ENCODE measurements at regions of chr4 and their contacts with region 1.

Region 1: GRCh38 chr4:102760645-102761295 is at the start of gene MANBA:
- DNase-seq: peak; percentile 78 to 84 (median 79)
- H3K4me3 ChIP-seq: peak within 1 kb of the TSS; percentile 77 to 89
- H3K4me3 Mint-ChIP-seq: peak within 1 kb of the TSS; percentile 92 to 99 (median 98)
- H3K27ac ChIP-seq: peak within 1 kb of the TSS; percentile 65
- H3K27ac Mint-ChIP-seq: peak within 1 kb of the TSS; percentile 75 to 96 (median 94)
- H3K4me1 ChIP-seq: peaks cover 18% of the 10 kb centered on the region
- H3K4me1 Mint-ChIP-seq: peaks cover 24 to 47% (median 36%) of the 10 kb centered on the region in 4 donors
- H3K27me3 ChIP-seq: no peaks in the 10 kb centered on the region
- H3K27me3 Mint-ChIP-seq: peaks cover 0 to 3% of the 10 kb centered on the region in 2 donors
- total RNA-seq, gene MANBA: 30.0 to 33.2 TPM

Region 2: DNA sequence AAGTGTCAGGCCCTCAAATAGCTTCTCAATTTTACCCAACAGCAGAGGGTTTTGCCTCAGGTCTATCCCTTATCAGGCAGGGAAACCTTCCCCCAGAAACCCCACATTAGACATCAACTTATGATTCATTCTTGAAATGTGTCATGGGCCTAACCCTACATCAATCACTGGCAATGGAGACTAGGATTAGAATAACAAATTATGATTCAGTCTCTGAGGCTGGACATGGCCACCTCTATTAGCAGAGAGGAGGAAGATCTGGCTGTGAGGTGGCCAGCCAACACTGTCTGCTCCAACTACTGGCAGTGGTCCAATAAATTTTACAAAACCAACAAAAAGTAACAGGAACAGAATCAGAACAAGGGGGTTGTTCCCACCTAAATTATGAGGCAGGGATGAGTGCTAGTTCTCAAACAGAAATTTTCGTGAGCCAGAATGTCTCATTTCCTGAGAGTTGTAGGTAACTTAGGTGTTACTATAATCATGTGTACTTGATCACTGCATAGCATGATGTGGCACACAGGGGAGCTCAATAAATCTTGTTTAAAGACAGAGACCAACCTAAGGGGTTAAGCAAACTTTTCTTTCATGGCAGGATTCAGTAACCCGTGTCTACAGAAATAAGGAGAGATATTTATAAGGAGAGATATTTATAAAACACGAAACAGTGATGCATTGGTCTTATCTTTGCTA is 132.8 kb before region 1 on chr4:
- CTCF ChIA-PET with region 1: interaction called, 3 read pairs
- POLR2A ChIA-PET with region 1: interaction called, 22 read pairs
- intact Hi-C with region 1: loop called (anchors 5 kb)
- DNase-seq: peak in 1 of 5 donors; percentile 49
- H3K4me3 ChIP-seq: no peak overlapping the region
- H3K4me3 Mint-ChIP-seq: peak overlapping the region in 4 of 8 donors; percentile 13 to 71 (median 38)
- H3K27ac ChIP-seq: no peak overlapping the region
- H3K27ac Mint-ChIP-seq: peak overlapping the region in 5 of 7 donors; percentile 35 to 93 (median 81)
- H3K4me1 ChIP-seq: peaks cover 66% of the 10 kb centered on the region
- H3K4me1 Mint-ChIP-seq: peaks cover 47 to 94% (median 65%) of the 10 kb centered on the region in 4 donors
- H3K27me3 ChIP-seq: no peaks in the 10 kb centered on the region
- H3K27me3 Mint-ChIP-seq: no peaks in the 10 kb centered on the region

Region 3: DNA sequence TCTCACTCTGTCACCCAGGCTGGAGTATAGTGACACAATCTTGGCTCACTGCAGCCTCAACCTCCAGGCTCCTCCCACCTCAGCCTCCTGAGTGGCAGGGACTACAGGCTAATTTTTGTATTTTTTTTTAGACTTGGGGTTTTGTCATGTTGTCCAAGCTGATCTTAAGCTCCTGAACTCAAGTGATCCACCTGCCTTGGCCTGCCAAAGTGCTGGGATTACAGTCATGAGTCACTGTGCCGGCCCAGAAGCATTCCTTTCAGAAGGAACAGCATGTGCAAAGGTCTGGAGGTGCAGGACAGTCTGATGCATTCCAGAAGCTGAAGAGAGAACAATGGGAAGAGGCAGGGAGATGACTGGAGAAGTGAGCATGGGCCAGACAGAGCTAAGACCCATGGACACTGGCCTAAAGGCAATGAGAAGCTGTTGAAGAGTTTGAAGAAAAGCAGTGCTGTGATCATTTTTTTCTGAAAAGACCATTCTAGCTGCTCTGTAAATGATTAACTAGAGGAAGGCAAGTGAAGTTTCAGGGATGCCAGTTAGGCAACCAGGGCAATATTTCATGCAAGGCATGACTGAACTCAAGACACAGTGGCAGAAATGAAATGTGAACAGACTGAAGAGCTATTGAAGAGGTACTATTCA is 43.2 kb before region 1 on chr4:
- CTCF ChIA-PET with region 1: no interaction called
- POLR2A ChIA-PET with region 1: no interaction called
- intact Hi-C with region 1: no loop called
- DNase-seq: no peak
- H3K4me3 ChIP-seq: no peak overlapping the region
- H3K4me3 Mint-ChIP-seq: no peak overlapping the region
- H3K27ac ChIP-seq: no peak overlapping the region
- H3K27ac Mint-ChIP-seq: peak overlapping the region in 3 of 7 donors; percentile 5 to 11 (median 8)
- H3K4me1 ChIP-seq: no peaks in the 10 kb centered on the region
- H3K4me1 Mint-ChIP-seq: peaks cover 0 to 4% (median 0%) of the 10 kb centered on the region in 4 donors
- H3K27me3 ChIP-seq: no peaks in the 10 kb centered on the region
- H3K27me3 Mint-ChIP-seq: no peaks in the 10 kb centered on the region

Region 4: GRCh38 chr4:102789317-102789717 is 28.5 kb after region 1 on chr4:
- CTCF ChIA-PET with region 1: interaction called, 4 read pairs
- POLR2A ChIA-PET with region 1: interaction called, 12 read pairs
- intact Hi-C with region 1: loop called (anchors 2 kb)
- DNase-seq: no peak
- H3K4me3 ChIP-seq: no peak overlapping the region
- H3K4me3 Mint-ChIP-seq: no peak overlapping the region
- H3K27ac ChIP-seq: no peak overlapping the region
- H3K27ac Mint-ChIP-seq: peak overlapping the region in 2 of 7 donors; percentile 14 to 68
- H3K4me1 ChIP-seq: peaks cover 6% of the 10 kb centered on the region
- H3K4me1 Mint-ChIP-seq: peaks cover 6 to 24% (median 20%) of the 10 kb centered on the region in 4 donors
- H3K27me3 ChIP-seq: no peaks in the 10 kb centered on the region
- H3K27me3 Mint-ChIP-seq: no peaks in the 10 kb centered on the region

Region 5: GRCh38 chr4:102815981-102816380 is 55.2 kb after region 1 on chr4:
- CTCF ChIA-PET with region 1: interaction called, 4 read pairs
- POLR2A ChIA-PET with region 1: interaction called, 10 read pairs
- intact Hi-C with region 1: no loop called
- DNase-seq: no peak
- H3K4me3 ChIP-seq: no peak overlapping the region
- H3K4me3 Mint-ChIP-seq: peak overlapping the region in 6 of 8 donors; percentile 7 to 84 (median 70)
- H3K27ac ChIP-seq: no peak overlapping the region
- H3K27ac Mint-ChIP-seq: peak overlapping the region in 5 of 7 donors; percentile 23 to 77 (median 45)
- H3K4me1 ChIP-seq: peaks cover 98% of the 10 kb centered on the region
- H3K4me1 Mint-ChIP-seq: peaks cover 70 to 92% (median 81%) of the 10 kb centered on the region in 4 donors
- H3K27me3 ChIP-seq: no peaks in the 10 kb centered on the region
- H3K27me3 Mint-ChIP-seq: no peaks in the 10 kb centered on the region

Region 6: DNA sequence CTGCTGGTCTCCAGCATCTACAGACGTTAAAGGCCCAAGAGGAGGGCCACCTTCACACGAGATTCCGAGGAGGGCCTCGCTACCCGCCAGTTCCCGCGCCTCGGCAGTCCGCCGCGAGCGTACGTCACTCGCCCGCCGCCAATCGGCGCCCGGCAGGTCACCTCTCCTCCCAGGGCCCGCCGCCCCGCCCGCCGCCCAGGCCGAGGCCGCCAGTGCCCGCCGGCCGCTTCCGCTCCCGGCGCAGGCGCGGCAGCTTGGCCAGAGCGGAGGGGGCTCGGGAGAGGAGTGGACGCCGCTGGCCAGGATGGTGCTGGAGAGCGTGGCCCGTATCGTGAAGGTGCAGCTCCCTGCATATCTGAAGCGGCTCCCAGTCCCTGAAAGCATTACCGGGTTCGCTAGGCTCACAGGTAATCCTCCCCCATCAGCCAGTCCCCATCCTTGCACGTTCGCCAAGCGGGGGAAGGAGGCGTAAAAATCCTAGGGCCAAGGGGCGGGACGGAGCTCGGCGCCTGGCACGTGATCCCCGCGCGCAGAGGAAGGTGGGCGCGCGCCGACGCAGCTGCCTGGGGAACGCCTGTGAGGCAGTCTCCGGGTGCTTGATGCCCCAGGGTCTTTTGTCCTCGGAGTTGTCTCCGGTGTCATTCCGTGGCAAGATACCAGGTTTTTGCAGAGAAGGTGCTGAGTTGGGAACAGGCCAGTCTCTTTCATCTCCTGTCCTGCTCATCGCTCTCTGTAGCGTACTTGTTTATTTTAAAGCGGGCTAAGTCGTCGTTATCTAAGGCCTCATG is 108.2 kb after region 1 on chr4 and contains the start of gene CISD2:
- CTCF ChIA-PET with region 1: interaction called, 8 read pairs
- POLR2A ChIA-PET with region 1: interaction called, 28 read pairs
- intact Hi-C with region 1: loop called (anchors 1 kb)
- DNase-seq: peak; percentile 92 to 94 (median 92)
- H3K4me3 ChIP-seq: peak within 1 kb of the TSS; percentile 58 to 74
- H3K4me3 Mint-ChIP-seq: peak within 1 kb of the TSS; percentile 91 to 99 (median 95)
- H3K27ac ChIP-seq: peak within 1 kb of the TSS; percentile 91
- H3K27ac Mint-ChIP-seq: peak within 1 kb of the TSS; percentile 95 to 100 (median 99)
- H3K4me1 ChIP-seq: peaks cover 54% of the 10 kb centered on the region
- H3K4me1 Mint-ChIP-seq: peaks cover 39 to 82% (median 50%) of the 10 kb centered on the region in 4 donors
- H3K27me3 ChIP-seq: no peaks in the 10 kb centered on the region
- H3K27me3 Mint-ChIP-seq: no peaks in the 10 kb centered on the region
- total RNA-seq, gene CISD2: 18.5 to 22.0 TPM

Region 7: GRCh38 chr4:103019308-103020124 is 258.7 kb after region 1 on chr4 and contains the start of gene SLC9B1:
- CTCF ChIA-PET with region 1: no interaction called
- POLR2A ChIA-PET with region 1: interaction called, 3 read pairs
- intact Hi-C with region 1: loop called (anchors 2 kb)
- DNase-seq: peak; percentile 91 to 94 (median 93)
- H3K4me3 ChIP-seq: peak within 1 kb of the TSS; percentile 11 to 90
- H3K4me3 Mint-ChIP-seq: peak within 1 kb of the TSS; percentile 85 to 98 (median 91)
- H3K27ac ChIP-seq: peak within 1 kb of the TSS; percentile 85
- H3K27ac Mint-ChIP-seq: peak within 1 kb of the TSS in 6 of 7 donors; percentile 97 to 100 (median 99)
- H3K4me1 ChIP-seq: peaks cover 17% of the 10 kb centered on the region
- H3K4me1 Mint-ChIP-seq: peaks cover 10 to 23% (median 19%) of the 10 kb centered on the region in 4 donors
- H3K27me3 ChIP-seq: no peaks in the 10 kb centered on the region
- H3K27me3 Mint-ChIP-seq: no peaks in the 10 kb centered on the region
- total RNA-seq, gene SLC9B1: 3.2 to 5.2 TPM

Measured in CD4-positive, alpha-beta memory T cell (primary cell).